ENCODE measurements at regions of chr1 and their contacts with region 1.

Region 1: DNA sequence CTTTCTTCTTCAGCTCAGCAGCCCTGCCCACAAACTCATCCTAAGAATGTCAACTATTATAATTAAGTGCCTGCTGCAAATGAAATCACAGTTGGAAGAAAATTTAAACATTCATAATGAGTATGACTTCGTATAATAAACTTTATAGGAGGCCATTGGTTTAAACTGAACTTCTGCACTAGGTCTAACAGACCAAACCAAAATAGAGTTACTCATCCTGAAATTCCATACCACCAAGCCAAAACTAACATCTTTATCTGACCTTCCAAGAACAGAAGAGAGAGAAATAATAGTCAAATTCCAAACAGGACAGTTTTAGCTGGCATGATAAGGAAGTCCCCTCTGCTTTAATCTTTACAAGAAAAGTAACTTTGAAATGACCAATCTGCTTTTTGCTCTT is 472.4 kb upstream of the PRMT6 start:
- DNase-seq: no peak
- ATAC-seq: no peak
- H3K4me3 Mint-ChIP-seq: no peak overlapping the region
- H3K27ac Mint-ChIP-seq: no peak overlapping the region
- H3K4me1 Mint-ChIP-seq: no peaks in the 10 kb centered on the region
- H3K27me3 Mint-ChIP-seq: no peaks in the 10 kb centered on the region

Region 2: DNA sequence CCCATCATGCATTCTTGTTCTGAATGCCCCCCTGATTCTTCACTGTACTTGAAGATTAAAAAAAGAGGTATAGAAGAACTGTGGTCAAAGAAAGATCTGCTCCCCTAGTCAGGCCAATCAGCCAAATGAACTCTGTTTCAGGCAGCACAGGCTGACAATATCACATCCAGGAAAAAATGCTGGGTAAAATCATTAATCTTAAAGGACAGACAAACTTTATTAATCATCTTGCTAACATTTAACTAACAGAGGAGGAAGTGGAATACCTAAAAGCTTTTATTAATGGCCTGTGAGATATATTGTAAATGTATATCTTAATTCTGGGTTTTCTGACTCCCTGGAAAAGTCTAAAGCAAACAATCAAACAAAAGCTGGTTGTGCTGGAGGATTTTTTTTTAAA is 188.1 kb before region 1 on chr1:
- CTCF ChIA-PET with region 1: no interaction called
- POLR2A ChIA-PET with region 1: no interaction called
- intact Hi-C with region 1: no loop called
- DNase-seq: no peak
- ATAC-seq: no peak
- H3K4me3 Mint-ChIP-seq: no peak overlapping the region
- H3K27ac Mint-ChIP-seq: no peak overlapping the region
- H3K4me1 Mint-ChIP-seq: no peaks in the 10 kb centered on the region
- H3K27me3 Mint-ChIP-seq: no peaks in the 10 kb centered on the region

Region 3: DNA sequence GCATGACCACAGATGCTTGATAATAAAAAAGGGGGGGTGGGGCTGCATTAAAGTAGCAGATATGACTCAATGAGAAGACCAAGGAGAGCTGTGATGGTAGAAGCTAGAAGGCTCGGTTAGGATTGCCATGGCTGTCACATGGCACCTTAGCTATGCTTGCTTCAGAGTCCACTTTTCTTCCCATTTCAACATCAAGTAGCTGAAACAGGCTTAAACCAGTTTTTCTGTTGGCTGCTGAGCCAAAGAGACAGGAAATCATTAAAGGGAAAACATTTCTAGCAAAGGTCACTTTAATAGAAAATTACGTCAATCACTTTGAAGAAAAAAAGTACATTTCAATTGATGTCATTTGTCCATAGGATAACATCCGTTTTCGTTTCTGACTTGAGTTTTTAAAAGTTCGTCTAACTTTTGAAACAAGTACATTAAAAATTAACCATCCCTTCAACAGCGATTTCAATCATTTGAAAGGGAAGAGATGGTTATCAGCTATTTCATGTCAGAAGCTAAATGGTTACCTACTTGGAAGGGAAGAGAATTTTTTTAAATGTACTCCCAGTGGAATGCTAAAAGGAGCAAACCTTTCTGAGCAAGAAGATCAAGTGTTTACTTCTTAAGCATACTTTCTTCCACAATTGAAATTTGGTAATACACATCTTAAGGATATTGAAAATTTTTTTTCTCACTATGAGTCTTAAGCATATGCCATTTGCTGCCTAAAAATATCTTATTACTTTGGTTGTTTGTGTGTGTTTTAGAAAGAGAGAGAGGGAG is 15.7 kb before region 1 on chr1:
- CTCF ChIA-PET with region 1: no interaction called
- POLR2A ChIA-PET with region 1: no interaction called
- intact Hi-C with region 1: loop called in 1 of 2 experiments (anchors 1 kb)
- DNase-seq: no peak
- ATAC-seq: no peak
- H3K4me3 Mint-ChIP-seq: no peak overlapping the region
- H3K27ac Mint-ChIP-seq: no peak overlapping the region
- H3K4me1 Mint-ChIP-seq: no peaks in the 10 kb centered on the region
- H3K27me3 Mint-ChIP-seq: no peaks in the 10 kb centered on the region

Region 4: DNA sequence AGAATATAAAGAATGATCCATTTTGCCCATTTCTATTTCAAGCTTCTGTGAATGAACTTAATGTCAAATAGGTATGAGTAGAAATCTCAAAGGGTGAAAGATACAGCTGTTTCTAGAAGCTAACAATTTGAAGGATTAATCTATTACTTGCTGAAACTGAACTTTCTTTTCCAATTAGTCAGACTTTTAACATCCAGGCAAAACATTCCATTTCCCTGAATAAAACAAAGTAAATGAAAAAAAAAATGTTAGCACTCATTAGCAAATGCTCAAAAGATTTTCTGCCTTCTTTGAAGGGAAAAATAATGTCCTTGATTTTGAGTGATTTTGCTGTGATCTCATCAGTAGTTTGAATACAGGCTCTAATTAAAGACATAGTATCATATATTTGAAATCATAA is 24.7 kb after region 1 on chr1:
- CTCF ChIA-PET with region 1: no interaction called
- POLR2A ChIA-PET with region 1: no interaction called
- intact Hi-C with region 1: no loop called
- DNase-seq: no peak
- ATAC-seq: no peak
- H3K4me3 Mint-ChIP-seq: no peak overlapping the region
- H3K27ac Mint-ChIP-seq: no peak overlapping the region
- H3K4me1 Mint-ChIP-seq: no peaks in the 10 kb centered on the region
- H3K27me3 Mint-ChIP-seq: no peaks in the 10 kb centered on the region

Region 5: DNA sequence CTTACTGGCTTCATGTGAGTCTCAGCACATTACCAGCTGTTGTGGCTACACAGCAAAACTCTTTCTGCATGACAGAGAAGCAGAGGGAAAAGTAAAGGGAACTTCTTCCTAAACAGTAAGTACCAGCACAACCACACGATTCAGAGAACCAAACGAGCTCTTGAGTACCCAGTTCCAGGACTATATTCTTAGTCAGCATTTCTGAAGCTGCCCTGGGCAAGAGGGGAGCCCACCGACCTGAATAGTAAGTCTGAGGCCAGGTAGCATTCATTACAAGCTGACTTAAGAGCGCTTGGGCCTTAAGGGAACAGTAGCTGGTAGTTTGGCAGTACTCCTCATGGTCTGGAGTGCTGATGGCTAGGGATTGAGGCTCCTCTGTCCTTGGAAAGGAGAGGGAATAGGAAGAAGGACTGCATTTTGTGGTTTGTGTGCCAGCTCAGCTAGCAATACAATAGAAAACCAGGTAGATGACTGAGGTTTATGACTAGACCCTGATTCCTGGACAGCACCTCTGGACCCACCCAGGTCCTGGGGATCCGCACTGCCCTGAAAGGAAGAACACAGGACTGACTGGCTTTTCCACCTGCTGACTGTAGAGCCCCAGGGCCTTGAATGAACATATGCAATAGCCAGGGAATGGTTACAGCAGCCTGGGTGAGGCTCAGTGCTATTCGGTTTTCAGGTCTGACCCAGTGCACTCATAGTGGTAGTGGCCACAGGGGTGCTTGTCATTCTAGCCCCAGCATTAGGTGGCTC is 75.6 kb after region 1 on chr1:
- CTCF ChIA-PET with region 1: no interaction called
- POLR2A ChIA-PET with region 1: no interaction called
- intact Hi-C with region 1: no loop called
- DNase-seq: no peak
- ATAC-seq: no peak
- H3K4me3 Mint-ChIP-seq: no peak overlapping the region
- H3K27ac Mint-ChIP-seq: no peak overlapping the region
- H3K4me1 Mint-ChIP-seq: no peaks in the 10 kb centered on the region
- H3K27me3 Mint-ChIP-seq: no peaks in the 10 kb centered on the region

Region 6: GRCh38 chr1:107450899-107451664 is 867.0 kb after region 1 on chr1:
- CTCF ChIA-PET with region 1: no interaction called
- POLR2A ChIA-PET with region 1: no interaction called
- intact Hi-C with region 1: no loop called
- DNase-seq: no peak
- ATAC-seq: no peak
- H3K4me3 Mint-ChIP-seq: no peak overlapping the region
- H3K27ac Mint-ChIP-seq: no peak overlapping the region
- H3K4me1 Mint-ChIP-seq: no peaks in the 10 kb centered on the region
- H3K27me3 Mint-ChIP-seq: peaks cover 4% of the 10 kb centered on the region

Measured in activated CD4-positive, alpha-beta T cell treated with anti-CD3 and anti-CD28 coated beads for 36 hours (primary cell).